Gastrocnemius medialis (tissue), 4 donors: ENCODE measurements at regions of chr14 and their contacts with region 1.

Region 1: DNA sequence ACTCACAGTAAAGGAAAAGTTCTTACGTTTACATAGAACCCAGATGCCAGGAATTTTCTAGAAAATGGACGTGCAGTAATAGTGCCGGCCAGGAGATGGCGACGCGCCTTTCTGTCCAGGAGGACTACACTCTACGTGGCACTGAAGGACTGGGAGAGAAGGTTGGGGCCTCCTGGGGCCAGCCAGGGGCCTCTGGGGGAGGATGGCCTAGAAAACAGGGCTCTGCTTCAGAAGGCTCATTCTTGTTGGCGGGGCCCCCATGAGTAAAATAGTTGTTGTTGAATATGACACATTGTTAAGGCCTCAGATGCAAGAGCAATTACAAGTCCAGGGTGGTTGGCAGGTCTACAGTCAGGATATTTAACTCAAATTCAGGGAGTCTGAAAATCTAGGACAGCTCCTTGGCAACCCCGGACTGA is 120.1 kb upstream of the MAX start:
- DNase-seq: peak in 1 of 2 donors; percentile 20
- ATAC-seq: peak in 1 of 2 donors; percentile 62
- H3K4me3 ChIP-seq: no peak overlapping the region
- H3K27ac ChIP-seq: no peak overlapping the region
- H3K4me1 ChIP-seq: no peaks in the 10 kb centered on the region
- H3K27me3 ChIP-seq: no peaks in the 10 kb centered on the region
- CTCF ChIP-seq: peak; percentile 40 to 77 (median 70)
- POLR2A ChIP-seq: no peak

Region 2: GRCh38 chr14:65277027-65277426 is 54.6 kb after region 1 on chr14:
- in situ Hi-C with region 1: no loop called
- intact Hi-C with region 1: no loop called
- DNase-seq: no peak
- ATAC-seq: no peak
- H3K4me3 ChIP-seq: no peak overlapping the region
- H3K27ac ChIP-seq: no peak overlapping the region
- H3K4me1 ChIP-seq: no peaks in the 10 kb centered on the region
- H3K27me3 ChIP-seq: no peaks in the 10 kb centered on the region
- CTCF ChIP-seq: no peak
- POLR2A ChIP-seq: no peak

Region 3: GRCh38 chr14:65373679-65374039 is 151.2 kb after region 1 on chr14:
- in situ Hi-C with region 1: no loop called
- intact Hi-C with region 1: loop called (anchors 1 kb)
- DNase-seq: peak; percentile 28 to 40
- ATAC-seq: peak; percentile 89 to 97
- H3K4me3 ChIP-seq: peak overlapping the region in 1 of 4 donors; percentile 37
- H3K27ac ChIP-seq: no peak overlapping the region
- H3K4me1 ChIP-seq: no peaks in the 10 kb centered on the region
- H3K27me3 ChIP-seq: peaks cover 0 to 3% (median 0%) of the 10 kb centered on the region in 3 donors
- CTCF ChIP-seq: peak; percentile 17 to 48 (median 29)
- POLR2A ChIP-seq: no peak

Region 4: DNA sequence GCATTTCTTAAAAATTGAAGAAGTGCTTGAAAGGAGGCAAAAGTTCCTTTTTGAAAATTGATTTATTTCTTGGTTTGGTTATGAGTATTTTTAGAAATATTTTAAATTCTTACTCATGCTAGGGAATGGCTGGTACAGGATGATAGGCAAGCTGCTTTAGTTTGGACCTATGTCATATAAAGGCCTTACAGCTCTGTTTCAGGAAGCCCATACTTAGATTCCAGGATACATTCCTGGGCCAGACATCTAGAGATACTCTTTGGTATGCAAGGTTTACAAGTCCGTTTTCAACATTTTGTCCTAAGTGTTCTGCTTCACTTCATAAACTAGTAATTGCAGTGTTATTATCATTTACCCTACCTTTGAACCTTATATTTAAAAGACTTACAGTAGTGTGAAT is 376.9 kb after region 1 on chr14:
- in situ Hi-C with region 1: no loop called
- intact Hi-C with region 1: no loop called
- DNase-seq: no peak
- ATAC-seq: no peak
- H3K4me3 ChIP-seq: no peak overlapping the region
- H3K27ac ChIP-seq: no peak overlapping the region
- H3K4me1 ChIP-seq: no peaks in the 10 kb centered on the region
- H3K27me3 ChIP-seq: no peaks in the 10 kb centered on the region
- CTCF ChIP-seq: no peak
- POLR2A ChIP-seq: no peak